Activated B cell treated with CpG ODN at 0.5 μM for 24 hours (primary cell): ENCODE measurements at regions of chr19 and their contacts with region 1.

Region 1: DNA sequence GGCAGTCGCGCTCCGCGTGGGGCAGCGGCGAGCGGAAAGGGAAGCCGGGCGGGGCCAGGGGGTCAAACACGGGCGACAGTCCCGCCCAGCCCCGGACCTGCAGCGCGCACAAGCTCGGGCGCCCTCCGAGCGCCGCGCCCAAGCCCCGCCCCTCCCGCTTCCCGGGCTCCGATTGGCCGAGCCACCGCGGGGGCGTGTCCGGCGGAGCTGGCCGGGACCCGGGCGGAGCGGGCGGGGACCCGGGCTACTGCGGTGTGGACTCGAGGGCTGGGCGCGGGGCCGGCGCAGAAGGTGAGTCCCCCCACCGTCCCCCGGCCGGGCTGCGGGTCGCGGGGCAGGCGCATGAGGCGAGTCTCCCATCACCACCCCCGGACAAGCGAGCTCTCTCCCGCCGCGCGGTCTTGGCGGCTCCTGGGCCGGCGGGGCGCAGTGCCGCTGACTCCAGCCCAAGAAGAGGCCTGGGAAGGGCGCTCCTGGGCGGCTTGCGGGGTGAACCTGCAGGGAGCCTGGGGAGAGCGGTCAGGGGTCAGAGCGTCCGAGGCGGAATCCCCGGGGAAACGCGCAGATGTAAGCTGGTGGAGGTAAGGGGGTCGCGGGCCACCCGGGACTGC is at the start of gene PLEKHF1:
- DNase-seq: peak; percentile 94
- ATAC-seq: peak; percentile 95
- H3K4me3 Mint-ChIP-seq: peak within 1 kb of the TSS; percentile 79
- H3K27ac Mint-ChIP-seq: peak within 1 kb of the TSS; percentile 68
- H3K4me1 Mint-ChIP-seq: peaks cover 38% of the 10 kb centered on the region
- H3K27me3 Mint-ChIP-seq: no peaks in the 10 kb centered on the region
- CTCF ChIP-seq: no peak
- total RNA-seq, gene PLEKHF1: 5.5 and 5.8 TPM in 2 replicates

Region 2: DNA sequence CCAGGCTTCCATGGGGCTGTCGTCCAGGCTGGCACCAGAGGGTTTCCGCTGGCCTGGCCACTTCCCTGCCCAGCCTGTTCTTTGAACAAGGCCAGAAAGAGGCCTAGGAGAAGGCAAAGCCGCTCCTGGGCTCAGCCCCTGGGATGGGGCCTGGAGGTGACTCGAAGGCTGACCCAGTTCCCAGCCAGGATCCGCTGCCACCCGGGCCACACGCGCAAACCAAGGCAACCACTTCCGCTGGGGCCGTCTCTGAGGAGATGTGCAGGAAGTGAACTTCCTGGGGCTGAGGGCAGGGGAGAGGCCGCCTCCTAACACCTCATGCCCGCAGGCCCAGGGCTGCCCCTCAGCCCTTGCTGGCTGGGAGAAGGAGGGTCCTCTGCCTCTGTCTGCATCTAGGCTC is 15.1 kb after region 1 on chr19:
- CTCF ChIA-PET with region 1: interaction called, 4 read pairs
- POLR2A ChIA-PET with region 1: interaction called, 4 read pairs
- intact Hi-C with region 1: loop called (anchors 2 kb)
- DNase-seq: peak; percentile 55
- ATAC-seq: peak; percentile 97
- H3K4me3 Mint-ChIP-seq: peak overlapping the region; percentile 60
- H3K27ac Mint-ChIP-seq: peak overlapping the region; percentile 79
- H3K4me1 Mint-ChIP-seq: peaks cover 33% of the 10 kb centered on the region
- H3K27me3 Mint-ChIP-seq: no peaks in the 10 kb centered on the region
- CTCF ChIP-seq: no peak

Region 3: GRCh38 chr19:29694669-29695627 is 29.6 kb after region 1 on chr19:
- CTCF ChIA-PET with region 1: interaction called, 14 read pairs
- POLR2A ChIA-PET with region 1: interaction called, 3 read pairs
- intact Hi-C with region 1: loop called (anchors 1 kb)
- DNase-seq: peak; percentile 69
- ATAC-seq: peak; percentile 96
- H3K4me3 Mint-ChIP-seq: no peak overlapping the region
- H3K27ac Mint-ChIP-seq: no peak overlapping the region
- H3K4me1 Mint-ChIP-seq: peaks cover 19% of the 10 kb centered on the region
- H3K27me3 Mint-ChIP-seq: no peaks in the 10 kb centered on the region
- CTCF ChIP-seq: peak; percentile 76